T-cell (primary cell): ENCODE measurements at regions of chr4 and their contacts with region 1.

Region 1: DNA sequence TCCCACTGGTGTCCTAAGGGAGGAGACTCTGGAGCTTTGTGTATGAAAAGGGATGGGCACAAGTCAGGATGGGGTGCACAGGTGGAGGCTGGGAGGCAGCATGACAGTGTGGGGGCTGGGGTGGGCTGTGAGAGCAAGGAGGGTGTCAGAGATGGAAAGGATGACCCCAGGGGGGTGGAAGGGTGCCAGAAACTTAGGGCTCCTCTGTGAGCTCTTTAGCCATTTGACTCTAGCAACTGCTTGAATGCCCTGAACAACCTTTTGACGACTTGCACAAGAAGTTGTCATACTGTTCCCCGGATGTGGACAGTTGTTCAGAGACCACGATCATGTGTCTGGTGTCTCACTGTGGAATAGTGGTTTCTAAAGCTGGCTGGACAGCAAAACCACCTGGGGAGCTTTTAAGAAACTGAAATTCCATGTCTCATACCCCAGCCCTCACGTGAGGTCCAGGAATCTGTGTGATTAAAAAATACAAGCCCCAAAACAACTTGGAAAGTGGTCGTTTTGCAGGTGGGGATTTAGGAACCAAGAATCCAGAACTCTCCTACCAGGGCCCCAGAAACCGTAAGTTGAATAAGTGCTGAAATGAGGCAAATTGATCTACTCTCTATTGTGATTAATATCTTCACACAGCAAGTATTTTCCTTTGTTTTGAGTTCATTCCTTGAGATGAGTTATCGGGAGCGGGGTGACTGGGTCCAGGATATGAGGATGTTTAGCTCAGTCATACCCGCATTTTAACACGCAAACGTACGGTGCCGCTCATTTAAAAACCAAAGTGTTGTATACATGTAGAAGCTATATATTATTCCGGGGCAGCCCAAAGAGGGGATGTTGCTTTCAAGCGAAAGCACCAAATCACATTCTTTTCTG is 3.4 kb downstream of the RHOH start:
- DNase-seq: peak in 24 of 35 experiments; percentile 39 to 78 (median 49)
- ATAC-seq: peak; percentile 16 to 43 (median 35)
- H3K4me3 ChIP-seq: peak overlapping the region; percentile 87 to 96
- H3K4me3 Mint-ChIP-seq: peak overlapping the region; percentile 96 to 99 (median 98)
- H3K27ac ChIP-seq: peak overlapping the region; percentile 99
- H3K27ac Mint-ChIP-seq: peak overlapping the region; percentile 95 to 96
- H3K4me1 ChIP-seq: peaks cover 33 to 48% of the 10 kb centered on the region in 2 experiments
- H3K4me1 Mint-ChIP-seq: peaks cover 40 to 58% (median 52%) of the 10 kb centered on the region in 3 donors
- H3K27me3 ChIP-seq: no peaks in the 10 kb centered on the region
- H3K27me3 Mint-ChIP-seq: no peaks in the 10 kb centered on the region

Region 2: GRCh38 chr4:40056716-40057585 is 143.3 kb before region 1 on chr4 and contains the start of gene N4BP2:
- CTCF ChIA-PET with region 1: interaction called in 1 of 2 experiments, 4 read pairs
- POLR2A ChIA-PET with region 1: interaction called, 5 to 11 read pairs
- DNase-seq: peak; percentile 41 to 86 (median 64)
- ATAC-seq: peak; percentile 69 to 79 (median 76)
- H3K4me3 ChIP-seq: peak within 1 kb of the TSS; percentile 75 to 97
- H3K4me3 Mint-ChIP-seq: peak within 1 kb of the TSS; percentile 94 to 98 (median 95)
- H3K27ac ChIP-seq: peak within 1 kb of the TSS; percentile 87
- H3K27ac Mint-ChIP-seq: peak within 1 kb of the TSS; percentile 96
- H3K4me1 ChIP-seq: peaks cover 17 to 21% of the 10 kb centered on the region in 2 experiments
- H3K4me1 Mint-ChIP-seq: peaks cover 31 to 44% (median 37%) of the 10 kb centered on the region in 3 donors
- H3K27me3 ChIP-seq: no peaks in the 10 kb centered on the region
- H3K27me3 Mint-ChIP-seq: no peaks in the 10 kb centered on the region
- total RNA-seq, gene N4BP2: 12.6 to 38.3 (median 15.3) TPM

Region 3: DNA sequence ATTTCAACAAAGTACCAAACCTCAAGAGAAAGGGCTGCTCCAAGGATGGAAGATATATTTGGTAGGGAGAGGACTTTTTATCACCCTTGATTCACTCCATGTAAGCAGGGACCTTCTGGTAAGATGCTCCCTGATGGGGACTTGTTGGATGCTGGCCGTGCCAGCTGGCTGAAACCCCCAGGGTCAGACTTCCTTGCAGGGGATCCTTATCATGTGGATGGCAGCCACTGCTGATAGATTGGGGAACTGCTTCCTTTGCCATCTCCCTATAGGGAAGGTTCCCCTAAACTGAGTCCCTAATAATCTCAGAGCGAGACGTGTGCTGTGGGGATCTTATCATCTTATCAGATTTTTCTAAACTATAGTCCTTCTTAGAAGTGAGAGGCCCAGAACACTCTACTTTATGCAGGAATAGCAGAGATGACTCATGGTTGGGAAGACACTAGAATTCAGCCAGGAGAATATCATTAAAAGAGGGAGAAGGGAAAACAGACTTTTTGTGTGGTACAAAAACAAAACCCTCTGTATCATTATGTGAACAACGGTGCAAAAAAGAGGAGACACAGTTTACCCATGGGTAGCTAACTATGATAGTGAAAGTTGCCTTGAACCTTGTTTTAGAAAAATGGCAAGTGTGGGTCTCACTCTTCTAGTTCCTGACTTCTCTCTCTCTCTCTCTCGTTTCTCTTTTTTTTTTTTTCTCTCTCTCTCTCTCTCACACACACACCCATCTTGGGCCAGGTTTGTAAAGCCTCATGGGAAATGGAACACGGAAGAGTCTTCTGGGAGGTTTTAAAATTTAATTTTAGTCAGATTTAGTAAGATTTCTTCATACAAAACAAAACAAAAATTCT is 12.7 kb after region 1 on chr4:
- CTCF ChIA-PET with region 1: interaction called in 1 of 2 experiments, 8 read pairs
- POLR2A ChIA-PET with region 1: interaction called, 8 to 47 read pairs
- DNase-seq: no peak
- ATAC-seq: no peak
- H3K4me3 ChIP-seq: peak overlapping the region in 1 of 2 donors; percentile 15
- H3K4me3 Mint-ChIP-seq: peak overlapping the region; percentile 62 to 83 (median 78)
- H3K27ac ChIP-seq: peak overlapping the region; percentile 99
- H3K27ac Mint-ChIP-seq: peak overlapping the region; percentile 94 to 96
- H3K4me1 ChIP-seq: peaks cover 74 to 79% of the 10 kb centered on the region in 2 experiments
- H3K4me1 Mint-ChIP-seq: peaks cover 92 to 98% (median 95%) of the 10 kb centered on the region in 3 donors
- H3K27me3 ChIP-seq: no peaks in the 10 kb centered on the region
- H3K27me3 Mint-ChIP-seq: no peaks in the 10 kb centered on the region

Region 4: GRCh38 chr4:40223343-40223742 is 23.1 kb after region 1 on chr4:
- CTCF ChIA-PET with region 1: interaction called in 1 of 2 experiments, 6 read pairs
- POLR2A ChIA-PET with region 1: interaction called, 4 to 15 read pairs
- DNase-seq: no peak
- ATAC-seq: no peak
- H3K4me3 ChIP-seq: no peak overlapping the region
- H3K4me3 Mint-ChIP-seq: peak overlapping the region in 1 of 3 donors; percentile 83
- H3K27ac ChIP-seq: peak overlapping the region; percentile 51
- H3K27ac Mint-ChIP-seq: peak overlapping the region; percentile 62 to 82
- H3K4me1 ChIP-seq: peaks cover 58 to 73% of the 10 kb centered on the region in 2 experiments
- H3K4me1 Mint-ChIP-seq: peaks cover 92 to 95% (median 93%) of the 10 kb centered on the region in 3 donors
- H3K27me3 ChIP-seq: no peaks in the 10 kb centered on the region
- H3K27me3 Mint-ChIP-seq: no peaks in the 10 kb centered on the region

Region 5: DNA sequence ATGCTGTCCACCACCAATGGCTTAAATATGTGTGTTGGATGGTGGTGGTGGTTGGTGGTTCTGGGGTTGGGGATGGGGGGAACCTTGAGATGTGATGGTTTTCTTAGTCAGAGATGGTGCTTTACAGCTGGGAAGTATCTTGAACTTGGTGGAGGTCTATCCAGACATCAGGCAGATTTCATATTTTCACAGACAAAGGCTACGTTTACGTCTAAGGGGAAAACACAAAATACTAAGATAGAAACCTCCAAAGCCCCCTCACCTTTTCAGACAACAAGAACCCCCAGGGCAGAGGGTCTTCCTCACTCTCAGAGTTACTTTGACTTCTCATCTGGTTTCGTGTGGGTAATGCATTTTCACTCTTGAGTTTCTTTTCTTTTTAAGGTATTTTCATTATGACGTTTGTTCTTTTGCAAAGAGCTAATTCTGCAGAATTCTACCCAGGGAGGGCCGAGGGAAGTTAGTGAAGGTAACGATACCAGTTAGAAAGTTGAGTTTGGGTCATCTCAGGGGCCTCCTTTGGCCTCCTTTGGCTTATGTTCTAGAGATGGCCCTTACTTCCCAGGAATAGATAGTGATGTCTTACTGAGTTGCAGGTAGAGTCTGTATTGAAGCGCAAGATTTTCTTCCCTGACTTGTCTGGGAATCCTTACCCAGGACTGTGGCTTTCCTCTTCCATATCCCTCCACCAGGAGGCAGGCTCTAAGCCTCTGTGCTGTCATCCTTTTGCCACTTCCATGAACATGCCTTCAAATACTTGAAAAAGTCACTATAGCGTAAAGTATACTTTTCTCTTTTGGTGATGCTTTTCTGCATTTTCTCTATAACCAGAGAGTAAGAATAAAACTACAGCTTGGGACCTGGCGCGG is 28.5 kb after region 1 on chr4:
- CTCF ChIA-PET with region 1: interaction called, 3 to 6 read pairs
- POLR2A ChIA-PET with region 1: interaction called, 8 to 17 read pairs
- DNase-seq: peak in 1 of 35 experiments; percentile 52
- ATAC-seq: no peak
- H3K4me3 ChIP-seq: peak overlapping the region; percentile 15 to 19
- H3K4me3 Mint-ChIP-seq: peak overlapping the region; percentile 68 to 83 (median 76)
- H3K27ac ChIP-seq: peak overlapping the region; percentile 87
- H3K27ac Mint-ChIP-seq: peak overlapping the region; percentile 97 to 99
- H3K4me1 ChIP-seq: peaks cover 76 to 90% of the 10 kb centered on the region in 2 experiments
- H3K4me1 Mint-ChIP-seq: peaks cover 91 to 94% (median 91%) of the 10 kb centered on the region in 3 donors
- H3K27me3 ChIP-seq: no peaks in the 10 kb centered on the region
- H3K27me3 Mint-ChIP-seq: no peaks in the 10 kb centered on the region

Region 6: GRCh38 chr4:40238700-40239548 is 38.7 kb after region 1 on chr4:
- CTCF ChIA-PET with region 1: interaction called in 1 of 2 experiments, 7 read pairs
- POLR2A ChIA-PET with region 1: interaction called, 14 to 45 read pairs
- DNase-seq: peak in 34 of 35 experiments; percentile 56 to 92 (median 79)
- ATAC-seq: peak; percentile 86 to 94 (median 92)
- H3K4me3 ChIP-seq: peak overlapping the region; percentile 28 to 29
- H3K4me3 Mint-ChIP-seq: peak overlapping the region; percentile 67 to 76 (median 73)
- H3K27ac ChIP-seq: peak overlapping the region; percentile 97
- H3K27ac Mint-ChIP-seq: peak overlapping the region; percentile 93 to 95
- H3K4me1 ChIP-seq: peaks cover 67 to 99% of the 10 kb centered on the region in 2 experiments
- H3K4me1 Mint-ChIP-seq: peaks cover 91 to 95% (median 94%) of the 10 kb centered on the region in 3 donors
- H3K27me3 ChIP-seq: no peaks in the 10 kb centered on the region
- H3K27me3 Mint-ChIP-seq: no peaks in the 10 kb centered on the region